HepG2 (cell line): ENCODE measurements at regions of chr1 and their contacts with region 1.

Region 1: GRCh38 chr1:145996433-145997015 is at the start of gene TXNIP:
- DNase-seq: peak; percentile 94
- ATAC-seq: peak; percentile 99
- H3K4me3 ChIP-seq: peak within 1 kb of the TSS; percentile 68 to 98 (median 91)
- H3K27ac ChIP-seq: peak within 1 kb of the TSS; percentile 94
- H3K4me1 ChIP-seq: peaks cover 67% of the 10 kb centered on the region
- H3K27me3 ChIP-seq: no peaks in the 10 kb centered on the region; a peak in 1 of 5 replicates
- CTCF ChIP-seq: peak; percentile 14; the same call in 1 of the 2 replicates
- EP300 ChIP-seq: peak in 1 of 2 experiments; percentile 97; a peak in 3 of 4 replicates
- POLR2A ChIP-seq: peak; percentile 94 to 99
- RAD21 ChIP-seq: 0 out of 2 replicates have a peak, but pooled peaks have one; percentile 14
- total RNA-seq, gene TXNIP: 24.4 and 25.4 TPM in 2 replicates

Region 2: DNA sequence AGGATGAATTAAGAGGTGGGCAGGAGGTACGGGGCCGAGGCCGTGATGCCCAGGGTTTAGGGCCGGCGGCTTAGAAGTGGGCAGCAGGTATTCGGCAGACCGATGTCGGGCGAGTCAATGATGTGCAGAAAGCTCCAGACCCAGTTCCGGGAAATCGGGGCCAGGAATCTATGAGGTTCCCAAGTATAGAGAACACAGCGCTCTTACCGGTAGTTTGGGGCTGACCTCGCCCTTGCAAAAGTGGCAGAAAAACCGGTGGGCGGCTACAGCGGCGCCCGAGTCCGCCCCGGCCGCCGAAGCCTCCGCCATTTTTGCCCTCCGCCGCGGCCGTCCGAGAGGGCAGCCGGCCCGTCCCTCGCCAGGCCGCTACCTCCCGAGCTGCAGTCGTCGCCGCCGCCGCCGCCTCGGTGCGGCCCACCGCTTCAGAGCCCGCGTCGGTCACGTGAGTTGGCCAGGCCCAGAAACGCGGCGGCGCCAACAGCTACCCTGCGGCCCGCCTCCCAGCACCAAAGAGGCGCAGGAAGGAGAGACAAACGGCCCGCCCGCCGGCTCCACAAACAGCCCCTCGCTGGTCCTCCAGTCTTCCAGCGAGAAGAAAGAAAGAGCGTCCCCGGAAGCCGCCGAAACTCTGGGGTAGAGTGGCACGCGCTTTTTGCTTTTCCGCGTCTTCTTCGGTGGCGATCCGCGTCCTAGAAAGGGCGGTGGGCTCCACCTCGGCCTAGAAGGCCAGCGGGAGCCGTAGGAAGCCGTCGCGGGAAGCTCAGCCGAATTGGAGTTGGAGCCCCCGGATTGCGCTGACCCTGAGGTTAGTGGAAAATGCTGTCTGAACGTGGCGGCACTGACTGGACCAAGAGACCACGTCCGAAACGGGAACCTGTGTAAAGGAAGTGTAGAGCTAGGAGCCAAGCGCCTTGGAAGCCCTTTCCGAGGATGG is 172.7 kb before region 1 on chr1 and contains the starts of genes POLR3C and RNF115:
- CTCF ChIA-PET with region 1: no interaction called
- POLR2A ChIA-PET with region 1: no interaction called
- in situ Hi-C with region 1: no loop called
- intact Hi-C with region 1: no loop called
- DNase-seq: peak; percentile 84
- ATAC-seq: peak; percentile 96
- H3K4me3 ChIP-seq: peak within 1 kb of the TSS; percentile 58 to 88 (median 73)
- H3K27ac ChIP-seq: peak within 1 kb of the TSS; percentile 93
- H3K4me1 ChIP-seq: peaks cover 14% of the 10 kb centered on the region
- H3K27me3 ChIP-seq: no peaks in the 10 kb centered on the region; a peak in 1 of 5 replicates
- CTCF ChIP-seq: 0 out of 2 replicates have a peak, but pooled peaks have one; percentile 10
- EP300 ChIP-seq: no peak
- POLR2A ChIP-seq: peak in 1 of 2 experiments; percentile 72; a peak in 3 of 4 replicates
- RAD21 ChIP-seq: peak; percentile 51; the same call in 1 of the 2 replicates
- total RNA-seq, gene POLR3C: 24.3 TPM in 2 replicates
- total RNA-seq, gene RNF115: 7.8 and 10.1 TPM in 2 replicates

Region 3: DNA sequence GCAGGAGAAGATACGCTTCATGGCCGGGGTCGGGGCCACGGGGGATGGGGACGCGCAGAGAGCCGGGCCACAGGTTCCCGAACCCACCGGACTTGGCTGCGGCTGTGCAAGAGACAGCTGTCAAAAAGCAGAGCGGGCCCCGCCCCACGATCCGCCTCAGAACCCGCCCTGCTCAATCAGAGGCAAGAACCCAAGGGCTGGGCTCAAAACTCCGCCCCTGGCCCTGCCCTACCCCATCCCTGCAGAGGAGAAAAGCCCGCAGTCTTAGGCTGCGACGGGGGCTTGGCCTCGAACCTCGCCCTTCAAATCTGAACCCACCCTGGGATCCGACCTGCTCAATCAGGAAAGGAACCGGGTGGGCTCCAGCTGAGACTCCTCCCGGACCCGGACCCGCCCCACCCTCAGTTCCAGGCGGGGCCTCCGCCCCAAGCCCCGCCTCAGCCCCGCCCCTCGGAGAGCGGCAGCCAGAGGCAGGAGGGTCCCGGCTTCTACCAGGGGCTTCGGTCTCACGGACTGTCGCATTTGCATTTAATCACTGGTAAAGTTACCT is 110.7 kb before region 1 on chr1 and contains the start of gene ANKRD35:
- CTCF ChIA-PET with region 1: no interaction called
- POLR2A ChIA-PET with region 1: no interaction called
- in situ Hi-C with region 1: loop called (anchors 10 kb)
- intact Hi-C with region 1: no loop called
- DNase-seq: peak; percentile 63
- ATAC-seq: peak; percentile 99
- H3K4me3 ChIP-seq: peak within 1 kb of the TSS; percentile 63 to 80 (median 71)
- H3K27ac ChIP-seq: no peak within 1 kb of the TSS
- H3K4me1 ChIP-seq: peaks cover 43% of the 10 kb centered on the region
- H3K27me3 ChIP-seq: peaks cover 2 to 26% of the 10 kb centered on the region in 2 experiments
- CTCF ChIP-seq: no peak
- EP300 ChIP-seq: no peak
- POLR2A ChIP-seq: no peak
- RAD21 ChIP-seq: no peak
- total RNA-seq, gene ANKRD35: 0.02 TPM in 1 of 2 replicates, not detected in the other

Region 4: DNA sequence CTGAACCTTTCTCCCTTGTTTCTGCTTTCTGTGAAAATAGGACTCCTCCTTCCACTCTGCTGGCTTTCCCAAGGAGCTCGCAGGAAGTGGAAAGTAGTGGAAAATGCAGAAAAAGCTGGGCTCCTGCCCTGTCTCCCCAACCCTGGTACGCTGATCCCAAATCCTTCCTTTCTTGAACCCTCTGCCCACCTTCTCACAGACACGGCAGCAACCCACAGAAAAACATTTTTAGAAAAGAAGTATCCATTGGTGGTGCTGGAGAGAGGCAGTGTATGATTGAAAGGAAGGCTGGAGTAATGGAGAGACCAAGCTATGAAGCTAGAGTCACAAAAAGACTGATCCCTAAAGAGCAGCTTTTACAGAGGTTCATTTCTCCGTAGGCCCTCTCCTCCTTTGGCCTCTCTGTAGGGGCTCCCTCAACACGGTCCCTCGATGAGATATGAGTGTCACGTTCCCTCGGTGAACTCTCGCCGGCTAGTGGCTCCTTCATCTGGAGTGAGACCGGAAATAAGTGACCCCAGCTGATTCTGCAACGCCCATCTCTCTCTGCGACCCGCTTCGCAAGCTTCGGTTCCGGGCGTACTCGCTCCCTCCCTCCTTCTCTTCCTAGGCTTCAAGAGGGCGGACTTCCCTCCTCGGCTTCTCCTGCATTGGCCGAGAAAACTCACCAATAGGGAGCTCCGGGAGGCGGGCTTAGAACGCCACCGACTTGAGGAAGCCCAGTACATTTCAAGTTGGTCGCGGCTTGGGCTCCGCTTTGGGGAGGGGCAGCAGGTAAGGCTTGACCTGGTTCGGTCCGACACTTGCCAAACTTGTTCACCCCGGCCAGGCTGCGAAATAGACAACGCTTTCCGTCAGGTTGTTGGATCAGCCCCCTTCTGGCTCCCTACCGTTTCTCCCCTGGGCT is 32.3 kb before region 1 on chr1 and contains the starts of genes ANKRD34A and POLR3GL:
- CTCF ChIA-PET with region 1: no interaction called
- POLR2A ChIA-PET with region 1: interaction called, 11 read pairs
- in situ Hi-C with region 1: no loop called
- intact Hi-C with region 1: no loop called
- DNase-seq: peak; percentile 92
- ATAC-seq: peak; percentile 88
- H3K4me3 ChIP-seq: peak within 1 kb of the TSS; percentile 77 to 84 (median 82)
- H3K27ac ChIP-seq: peak within 1 kb of the TSS; percentile 70
- H3K4me1 ChIP-seq: peaks cover 45% of the 10 kb centered on the region
- H3K27me3 ChIP-seq: peaks cover 0 to 28% of the 10 kb centered on the region in 2 experiments; a peak in 3 of 5 replicates
- CTCF ChIP-seq: peak; percentile 22
- EP300 ChIP-seq: no peak
- POLR2A ChIP-seq: peak; percentile 57 to 85
- RAD21 ChIP-seq: 0 out of 2 replicates have a peak, but pooled peaks have one; percentile 29
- total RNA-seq, gene ANKRD34A: 0.07 and 0.14 TPM in 2 replicates
- total RNA-seq, gene POLR3GL: 12.4 and 15.3 TPM in 2 replicates

Region 5: DNA sequence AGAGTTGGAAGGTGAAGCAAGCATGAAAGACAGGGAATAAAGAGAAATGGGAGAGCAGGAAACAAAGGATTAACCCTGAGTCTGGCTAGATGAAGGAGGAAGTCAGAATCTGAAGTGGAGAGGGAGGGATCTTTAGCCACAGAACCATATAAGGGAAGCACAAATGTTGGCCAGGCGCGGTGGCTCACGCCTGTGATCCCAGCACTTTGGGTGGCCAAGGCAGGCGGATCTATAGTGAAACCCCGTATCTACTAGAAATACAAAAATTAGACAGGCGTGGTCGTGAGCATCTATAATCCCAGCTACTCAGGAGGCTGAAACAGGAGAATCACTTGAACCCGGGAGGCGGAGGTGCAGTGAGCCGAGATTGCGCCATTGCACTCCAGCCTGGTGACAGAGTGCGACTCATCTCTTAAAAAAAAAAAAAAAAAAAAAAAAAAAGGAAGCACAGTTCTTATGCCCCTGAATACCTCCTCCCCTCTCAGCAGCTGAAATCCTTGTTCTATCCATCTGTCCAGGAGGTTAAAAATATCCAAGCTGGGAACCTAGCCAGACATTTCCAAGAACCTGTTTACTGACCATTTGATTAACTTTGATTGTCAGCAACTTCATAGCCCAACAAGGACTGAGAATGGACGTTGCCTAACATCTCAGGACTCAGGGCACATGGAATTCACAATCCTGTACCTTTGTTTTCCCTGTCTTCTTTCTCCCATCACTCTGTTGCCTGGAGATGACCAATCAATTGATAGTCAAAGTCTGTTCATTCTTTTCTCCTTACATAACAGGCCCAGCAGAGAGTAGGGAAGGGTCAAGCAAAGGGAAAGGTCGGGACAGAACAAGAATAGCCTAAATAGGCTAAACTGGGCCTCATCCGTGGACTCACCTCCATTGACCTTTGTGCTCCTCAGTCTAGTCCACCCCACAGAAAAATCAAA is 10.8 kb before region 1 on chr1:
- CTCF ChIA-PET with region 1: no interaction called
- POLR2A ChIA-PET with region 1: interaction called, 5 read pairs
- in situ Hi-C with region 1: no loop called
- intact Hi-C with region 1: loop called (anchors 2 kb)
- DNase-seq: peak; percentile 56
- ATAC-seq: peak; percentile 44
- H3K4me3 ChIP-seq: peak overlapping the region; percentile 11 to 51 (median 14); a peak in 3 of 6 replicates
- H3K27ac ChIP-seq: no peak overlapping the region
- H3K4me1 ChIP-seq: peaks cover 76% of the 10 kb centered on the region
- H3K27me3 ChIP-seq: no peaks in the 10 kb centered on the region
- CTCF ChIP-seq: no peak
- EP300 ChIP-seq: 0 out of 4 replicates have a peak, but pooled peaks of 1 of the 2 experiments have one; percentile 3
- POLR2A ChIP-seq: no peak
- RAD21 ChIP-seq: no peak